Right ventricle myocardium superior (tissue), 1 donor: ENCODE measurements at regions of chr19 and their contacts with region 1.

Region 1: DNA sequence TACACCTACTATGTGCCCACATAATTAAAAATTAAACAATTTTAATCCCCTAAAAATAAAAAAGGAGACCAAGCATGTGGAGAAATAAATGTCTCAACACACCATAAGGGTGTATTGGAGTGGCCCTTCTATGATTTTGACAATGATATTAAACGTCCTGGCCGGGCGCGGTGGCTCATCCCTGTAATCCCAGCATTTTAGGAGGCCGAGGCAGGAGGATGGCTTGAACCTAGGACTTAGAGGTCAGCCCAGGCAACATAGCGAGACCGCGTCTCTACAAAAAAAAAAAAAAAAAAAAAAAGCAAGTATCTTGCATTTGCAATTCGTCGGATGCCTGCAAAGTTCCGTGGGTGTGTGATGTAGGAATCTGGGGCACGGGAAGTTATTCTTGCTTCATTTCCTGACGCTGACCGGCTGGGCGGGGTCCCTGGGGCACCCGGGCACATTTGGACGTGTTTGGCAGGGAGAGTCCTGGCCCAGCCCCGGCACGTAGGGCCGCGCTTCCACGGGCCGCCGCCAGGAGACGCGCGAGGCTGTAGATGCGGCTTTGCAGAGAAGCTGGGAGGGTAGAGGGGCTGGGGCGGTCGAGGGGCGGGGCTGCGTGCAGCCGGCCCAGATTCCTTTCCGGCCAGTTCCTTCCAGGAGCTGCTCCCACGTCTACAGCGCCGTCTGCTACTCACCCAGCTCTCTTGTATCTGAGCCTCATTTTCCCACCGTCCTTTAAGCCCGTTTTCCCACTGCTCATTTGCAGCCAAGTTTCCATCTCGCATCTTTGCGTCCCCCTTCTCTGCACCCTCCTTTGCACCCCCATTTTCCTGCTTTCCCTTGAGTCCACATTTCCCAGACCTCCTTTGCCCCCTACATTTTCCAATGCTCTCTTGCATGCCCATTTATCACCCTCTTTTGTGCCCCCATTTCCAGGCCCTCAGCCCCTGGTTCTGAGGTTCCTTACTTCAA is 2.2 kb upstream of the TSPAN16 start:
- DNase-seq: peak; percentile 98
- ATAC-seq: peak; percentile 98

Region 2: GRCh38 chr19:11078893-11079292 is 214.8 kb before region 1 on chr19:
- intact Hi-C with region 1: no loop called
- DNase-seq: no peak
- ATAC-seq: no peak

Region 3: GRCh38 chr19:11234486-11235075 is 59.1 kb before region 1 on chr19:
- intact Hi-C with region 1: no loop called
- DNase-seq: no peak
- ATAC-seq: no peak

Region 4: DNA sequence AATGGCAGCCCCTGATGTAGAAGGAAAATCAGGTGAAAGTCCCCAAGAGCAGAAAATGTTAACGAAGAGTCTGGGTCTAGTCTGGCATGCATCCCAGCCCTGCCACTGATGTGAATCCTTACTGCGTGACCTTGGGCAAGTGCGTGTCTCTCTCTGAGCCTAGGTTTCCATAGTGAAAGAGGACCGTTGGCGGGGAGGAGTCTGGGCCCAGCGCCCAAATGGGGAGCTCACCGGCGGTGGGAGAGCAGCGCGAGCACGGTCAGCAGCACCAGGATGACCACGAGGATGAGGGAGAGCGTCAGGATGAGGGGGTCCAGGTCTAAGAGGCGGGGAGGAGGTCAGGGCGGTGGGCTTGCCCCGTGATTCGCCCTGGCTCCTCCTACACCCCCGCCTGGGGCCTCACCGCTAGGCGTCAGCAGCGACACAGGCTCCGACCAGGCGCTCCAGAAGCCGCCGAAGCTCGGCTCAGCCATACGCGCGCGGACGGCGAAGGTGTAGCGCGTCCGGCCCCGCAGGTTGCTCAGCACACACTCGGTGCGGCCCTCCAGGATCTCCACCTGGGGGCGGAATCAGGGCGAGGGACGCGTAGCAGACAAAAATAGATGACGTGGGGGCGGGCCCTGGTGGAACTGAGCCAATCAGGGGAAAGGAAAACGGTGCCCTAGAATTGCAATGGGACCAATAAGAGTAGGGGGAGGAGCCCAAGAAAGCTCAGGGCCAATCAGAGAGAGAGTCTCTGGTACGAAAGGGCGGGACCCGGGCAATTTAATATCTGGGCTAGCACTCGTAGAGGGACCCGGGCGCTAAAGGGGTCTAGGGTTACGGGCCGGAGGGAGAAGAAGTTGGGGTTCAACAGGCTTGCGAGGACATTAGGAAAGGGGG is 87.2 kb after region 1 on chr19:
- intact Hi-C with region 1: loop called (anchors 10 kb)
- DNase-seq: peak; percentile 96
- ATAC-seq: peak; percentile 91

Region 5: DNA sequence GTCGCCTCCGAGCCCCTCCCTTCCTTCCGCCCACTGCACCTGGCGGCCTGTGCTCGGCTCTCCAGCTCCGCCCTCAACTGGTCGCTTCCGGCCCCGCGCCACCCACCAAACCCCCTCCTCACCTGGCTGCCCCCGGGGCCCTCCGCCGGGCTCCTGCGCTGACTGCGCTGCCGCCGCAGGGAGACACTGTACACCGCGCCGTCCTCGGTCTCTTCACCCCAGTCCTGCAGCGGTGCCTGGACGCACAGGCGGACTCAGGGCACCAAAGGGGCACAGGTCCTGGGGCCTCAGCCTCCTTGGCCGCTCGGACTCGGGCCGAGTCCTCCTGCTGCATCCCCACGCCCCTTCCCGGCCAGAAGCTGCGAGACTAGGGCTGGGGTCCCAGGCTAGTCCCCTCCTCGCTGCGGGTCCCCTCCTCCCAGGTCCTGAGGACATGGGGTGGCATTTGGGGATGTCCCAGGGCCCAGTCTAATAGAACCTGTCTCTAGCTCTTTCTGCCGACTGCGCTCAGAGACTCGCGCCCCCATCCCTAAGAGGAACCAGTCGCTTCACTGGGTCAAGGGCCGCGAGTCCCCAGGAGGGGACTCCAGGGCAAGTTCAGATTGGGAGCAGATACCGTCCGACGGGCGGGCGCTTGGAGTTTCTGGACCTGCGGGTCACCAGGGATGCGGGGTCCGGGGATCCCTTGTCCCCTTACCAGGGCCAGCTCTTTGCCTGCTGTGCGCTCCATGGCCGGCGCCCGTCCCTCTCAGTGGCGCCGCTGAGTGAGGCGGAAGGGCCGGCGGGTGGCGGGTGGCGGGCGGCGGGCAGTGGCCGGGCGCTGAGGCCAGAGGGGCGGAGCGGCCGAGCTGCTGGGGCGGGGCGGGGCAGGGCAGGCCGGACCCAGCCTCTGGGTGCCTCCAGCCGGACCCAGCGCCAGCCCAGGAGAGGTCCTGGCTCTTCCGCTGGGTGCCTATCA is 125.1 kb after region 1 on chr19 and contains the start of gene RGL3:
- intact Hi-C with region 1: no loop called
- DNase-seq: peak; percentile 74
- ATAC-seq: peak; percentile 62
- total RNA-seq, gene RGL3: 8.6 TPM

Region 6: GRCh38 chr19:11444059-11444458 is 150.3 kb after region 1 on chr19:
- intact Hi-C with region 1: loop called (anchors 5 kb)
- DNase-seq: no peak
- ATAC-seq: no peak

Region 7: GRCh38 chr19:11587302-11587974 is 293.7 kb after region 1 on chr19:
- intact Hi-C with region 1: loop called (anchors 10 kb)
- DNase-seq: peak; percentile 85
- ATAC-seq: peak; percentile 89